Panc1 (cell line): ENCODE measurements at regions of chr10 and their contacts with region 1.

Region 1: DNA sequence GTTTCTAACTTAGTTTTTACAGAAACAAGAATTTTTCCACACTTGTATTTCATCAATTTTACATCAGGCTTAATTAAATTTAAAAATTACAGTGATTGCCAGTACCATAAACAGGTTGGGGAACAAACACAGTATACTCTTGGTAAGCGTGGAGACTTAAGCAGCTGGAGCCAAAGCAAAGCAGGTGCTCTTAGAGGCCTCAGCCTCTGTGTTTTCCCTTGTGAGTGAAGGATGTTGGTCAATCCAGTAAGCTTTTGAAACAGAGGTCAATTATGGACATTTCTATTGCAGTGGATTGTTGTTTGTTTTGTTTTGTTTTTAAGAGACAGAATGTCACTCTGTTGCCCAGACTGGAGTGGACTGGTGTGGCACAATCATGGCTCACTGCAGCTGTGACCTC is 100.6 kb upstream of the CELF2 start:
- DNase-seq: no peak
- ATAC-seq: no peak
- H3K4me3 ChIP-seq: no peak overlapping the region
- H3K27ac ChIP-seq: no peak overlapping the region
- H3K4me1 ChIP-seq: no peaks in the 10 kb centered on the region
- H3K27me3 ChIP-seq: no peaks in the 10 kb centered on the region
- CTCF ChIP-seq: no peak

Region 2: DNA sequence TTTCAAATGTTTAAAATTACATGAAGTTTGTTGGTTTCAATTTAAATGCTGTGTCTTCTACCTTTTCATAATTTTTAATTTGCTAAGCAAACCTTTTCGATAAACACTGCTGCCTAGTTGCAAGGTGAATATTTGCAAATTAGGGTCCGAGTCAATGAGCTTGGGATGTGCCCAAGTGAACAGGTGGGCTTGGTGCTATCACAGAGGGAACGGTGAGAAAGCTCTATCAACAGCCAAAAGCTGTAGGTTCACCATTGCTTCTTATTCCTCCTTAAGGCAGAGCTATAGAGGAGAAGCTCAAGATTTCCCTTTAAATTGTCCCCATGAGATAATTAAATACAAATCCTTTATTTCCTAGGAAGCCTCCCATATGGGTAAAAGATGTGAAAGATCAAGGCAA is 144.6 kb before region 1 on chr10:
- CTCF ChIA-PET with region 1: no interaction called
- POLR2A ChIA-PET with region 1: no interaction called
- in situ Hi-C with region 1: no loop called
- intact Hi-C with region 1: no loop called
- DNase-seq: no peak
- ATAC-seq: no peak
- H3K4me3 ChIP-seq: no peak overlapping the region
- H3K27ac ChIP-seq: no peak overlapping the region
- H3K4me1 ChIP-seq: no peaks in the 10 kb centered on the region
- H3K27me3 ChIP-seq: no peaks in the 10 kb centered on the region
- CTCF ChIP-seq: no peak

Region 3: GRCh38 chr10:10903620-10904019 is 13.4 kb before region 1 on chr10:
- CTCF ChIA-PET with region 1: no interaction called
- POLR2A ChIA-PET with region 1: no interaction called
- in situ Hi-C with region 1: no loop called
- intact Hi-C with region 1: no loop called
- DNase-seq: no peak
- ATAC-seq: no peak
- H3K4me3 ChIP-seq: no peak overlapping the region
- H3K27ac ChIP-seq: no peak overlapping the region
- H3K4me1 ChIP-seq: no peaks in the 10 kb centered on the region
- H3K27me3 ChIP-seq: no peaks in the 10 kb centered on the region
- CTCF ChIP-seq: no peak

Region 4: GRCh38 chr10:10930979-10931743 is 14.1 kb after region 1 on chr10:
- CTCF ChIA-PET with region 1: interaction called, 14 read pairs
- POLR2A ChIA-PET with region 1: no interaction called
- in situ Hi-C with region 1: no loop called
- intact Hi-C with region 1: no loop called
- DNase-seq: no peak
- ATAC-seq: no peak
- H3K4me3 ChIP-seq: no peak overlapping the region
- H3K27ac ChIP-seq: no peak overlapping the region
- H3K4me1 ChIP-seq: no peaks in the 10 kb centered on the region
- H3K27me3 ChIP-seq: no peaks in the 10 kb centered on the region
- CTCF ChIP-seq: no peak